ENCODE measurements at regions of chr17 and their contacts with region 1.

Region 1: GRCh38 chr17:143782-144281 is 6.5 kb downstream of the SCGB1C2 start:
- DNase-seq: peak; percentile 81 to 92 (median 81)
- ATAC-seq: peak in 3 of 4 donors; percentile 82 to 89 (median 88)
- H3K4me3 ChIP-seq: no peak overlapping the region
- H3K27ac ChIP-seq: no peak overlapping the region
- H3K4me1 ChIP-seq: peaks cover 0 to 7% (median 1%) of the 10 kb centered on the region in 12 donors
- H3K27me3 ChIP-seq: peaks cover 0 to 3% (median 0%) of the 10 kb centered on the region in 9 donors
- CTCF ChIP-seq: peak; percentile 88 to 98 (median 94)
- POLR2A ChIP-seq: no peak

Region 2: GRCh38 chr17:309361-309888 is 165.6 kb after region 1 on chr17:
- intact Hi-C with region 1: loop called in 2 of 10 experiments (anchors 5 kb)
- DNase-seq: peak in 3 of 5 donors; percentile 25 to 59 (median 26)
- ATAC-seq: peak in 2 of 4 donors; percentile 40 to 58
- H3K4me3 ChIP-seq: no peak overlapping the region
- H3K27ac ChIP-seq: peak overlapping the region in 1 of 12 donors; percentile 9
- H3K4me1 ChIP-seq: peaks cover 0 to 13% (median under 1%) of the 10 kb centered on the region in 12 donors
- H3K27me3 ChIP-seq: no peaks in the 10 kb centered on the region
- CTCF ChIP-seq: peak; percentile 38 to 69 (median 51)
- POLR2A ChIP-seq: no peak

Region 3: GRCh38 chr17:393806-394717 is 250.2 kb after region 1 on chr17:
- intact Hi-C with region 1: loop called in 6 of 10 experiments (anchors 5 kb)
- DNase-seq: peak in 1 of 5 donors; percentile 38
- ATAC-seq: peak in 2 of 4 donors; percentile 34 to 44
- H3K4me3 ChIP-seq: peak overlapping the region in 1 of 12 donors; percentile 23
- H3K27ac ChIP-seq: peak overlapping the region in 1 of 12 donors; percentile 17
- H3K4me1 ChIP-seq: peaks cover 0 to 16% (median 0%) of the 10 kb centered on the region in 12 donors
- H3K27me3 ChIP-seq: no peaks in the 10 kb centered on the region
- CTCF ChIP-seq: no peak
- POLR2A ChIP-seq: no peak

Region 4: DNA sequence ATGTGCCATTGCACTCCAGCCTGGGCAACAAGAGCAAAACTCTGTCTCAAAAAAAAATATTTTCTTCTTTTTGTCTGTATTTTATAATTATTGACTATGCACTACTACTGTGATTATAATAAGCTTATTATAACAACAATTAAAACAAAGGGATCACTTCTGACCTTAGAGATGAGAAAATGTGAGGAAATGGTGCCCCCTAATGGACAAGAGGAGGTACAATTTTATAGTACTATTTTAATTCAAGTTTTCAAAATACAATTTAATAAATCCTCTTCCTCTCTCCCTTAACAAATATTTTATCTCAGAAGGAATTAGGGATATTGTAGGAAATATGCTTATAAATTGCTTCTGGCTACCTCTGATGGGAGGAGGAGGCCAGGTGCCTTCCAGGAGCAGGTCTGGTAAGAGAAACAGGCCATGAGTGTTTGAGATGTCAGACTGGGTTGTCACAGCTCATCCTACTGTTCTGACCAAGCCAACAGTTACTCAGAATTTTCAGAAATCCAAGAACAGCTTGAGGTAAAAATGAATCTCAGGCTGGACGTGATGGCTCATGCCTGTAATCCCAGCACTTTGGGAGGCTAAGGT is 556.8 kb after region 1 on chr17:
- intact Hi-C with region 1: loop called in 3 of 10 experiments (anchors 2 to 5 kb)
- DNase-seq: no peak
- ATAC-seq: peak in 2 of 4 donors; percentile 38 to 57
- H3K4me3 ChIP-seq: no peak overlapping the region
- H3K27ac ChIP-seq: no peak overlapping the region
- H3K4me1 ChIP-seq: peaks cover 0 to 25% (median 3%) of the 10 kb centered on the region in 12 donors
- H3K27me3 ChIP-seq: no peaks in the 10 kb centered on the region
- CTCF ChIP-seq: peak; percentile 61 to 86 (median 78)
- POLR2A ChIP-seq: no peak

Region 5: DNA sequence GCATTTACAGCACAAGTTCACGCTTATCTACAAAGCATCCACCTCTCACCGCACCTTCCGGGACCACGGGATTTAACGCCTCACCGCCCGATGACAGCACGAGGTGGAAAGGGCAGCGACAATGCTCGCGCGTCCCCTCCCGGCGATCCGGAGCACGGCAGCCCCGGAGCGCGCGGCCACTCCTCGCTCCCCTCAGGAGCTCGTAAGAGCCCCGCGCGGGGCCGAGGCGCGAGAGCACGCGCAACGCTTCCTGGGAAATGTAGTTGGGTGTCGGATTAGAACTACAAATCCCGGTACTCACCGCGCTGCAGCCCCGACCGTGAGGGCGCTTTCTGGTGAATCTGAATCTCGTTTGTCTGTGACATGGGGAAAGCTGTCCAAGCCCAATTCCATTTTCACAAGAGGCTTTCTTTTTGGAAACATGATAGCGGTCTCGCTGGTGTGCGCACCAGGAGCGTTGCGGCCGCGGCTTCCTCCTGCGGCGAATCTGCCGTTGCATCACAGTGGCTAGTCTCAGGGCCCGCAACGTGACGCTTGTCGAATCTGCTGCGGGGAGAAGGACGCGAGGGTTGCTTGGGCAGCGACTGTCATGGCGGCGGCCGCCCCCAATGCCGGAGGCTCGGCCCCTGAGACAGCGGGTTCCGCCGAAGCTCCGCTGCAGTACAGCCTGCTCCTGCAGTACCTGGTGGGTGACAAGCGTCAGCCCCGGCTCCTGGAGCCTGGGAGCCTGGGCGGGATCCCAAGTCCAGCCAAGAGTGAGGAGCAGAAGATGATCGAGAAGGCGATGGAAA is 852.9 kb after region 1 on chr17 and contains the start of gene TIMM22:
- intact Hi-C with region 1: loop called in 1 of 10 experiments (anchors 5 kb)
- DNase-seq: peak; percentile 92 to 95 (median 95)
- ATAC-seq: peak; percentile 93 to 96 (median 95)
- H3K4me3 ChIP-seq: peak within 1 kb of the TSS; percentile 75 to 100 (median 86)
- H3K27ac ChIP-seq: peak within 1 kb of the TSS; percentile 78 to 99 (median 92)
- H3K4me1 ChIP-seq: peaks cover 6 to 48% (median 38%) of the 10 kb centered on the region in 12 donors
- H3K27me3 ChIP-seq: no peaks in the 10 kb centered on the region
- CTCF ChIP-seq: peak; percentile 84 to 98 (median 93)
- POLR2A ChIP-seq: peak; percentile 2 to 59
- total RNA-seq, gene TIMM22: 12.5 to 20.4 (median 16.5) TPM

Measured in heart left ventricle (tissue), 16 donors.